ENCODE measurements at regions of chr21 and their contacts with region 1.

Region 1: GRCh38 chr21:28884976-28885852 is 107.5 kb downstream of the LTN1 start:
- DNase-seq: peak; percentile 81 to 98 (median 90)
- ATAC-seq: peak; percentile 91
- H3K4me3 ChIP-seq: peak overlapping the region; percentile 68
- H3K4me3 Mint-ChIP-seq: peak overlapping the region; percentile 92
- H3K27ac ChIP-seq: peak overlapping the region; percentile 87 to 93
- H3K27ac Mint-ChIP-seq: peak overlapping the region; percentile 99
- H3K4me1 ChIP-seq: peaks cover 20% of the 10 kb centered on the region
- H3K4me1 Mint-ChIP-seq: peaks cover 20% of the 10 kb centered on the region
- H3K27me3 ChIP-seq: no peaks in the 10 kb centered on the region
- H3K27me3 Mint-ChIP-seq: no peaks in the 10 kb centered on the region
- CTCF ChIP-seq: no peak

Region 2: GRCh38 chr21:28832013-28832714 is 53.0 kb before region 1 on chr21:
- CTCF ChIA-PET with region 1: no interaction called
- POLR2A ChIA-PET with region 1: interaction called, 14 read pairs
- intact Hi-C with region 1: loop called (anchors 1 to 5 kb)
- DNase-seq: peak in 5 of 9 experiments; percentile 4 to 75 (median 55)
- ATAC-seq: peak; percentile 85
- H3K4me3 ChIP-seq: no peak overlapping the region
- H3K4me3 Mint-ChIP-seq: peak overlapping the region; percentile 36
- H3K27ac ChIP-seq: peak overlapping the region in 1 of 2 experiments; percentile 55
- H3K27ac Mint-ChIP-seq: peak overlapping the region; percentile 74
- H3K4me1 ChIP-seq: peaks cover 60% of the 10 kb centered on the region
- H3K4me1 Mint-ChIP-seq: peaks cover 71% of the 10 kb centered on the region
- H3K27me3 ChIP-seq: no peaks in the 10 kb centered on the region
- H3K27me3 Mint-ChIP-seq: no peaks in the 10 kb centered on the region
- CTCF ChIP-seq: no peak

Region 3: GRCh38 chr21:28992526-28993292 is 107.5 kb after region 1 on chr21 and contains the start of gene LTN1:
- CTCF ChIA-PET with region 1: no interaction called
- POLR2A ChIA-PET with region 1: no interaction called
- intact Hi-C with region 1: loop called (anchors 1 to 10 kb)
- DNase-seq: peak; percentile 98 to 100 (median 99)
- ATAC-seq: peak; percentile 93
- H3K4me3 ChIP-seq: peak within 1 kb of the TSS; percentile 95 to 98
- H3K4me3 Mint-ChIP-seq: peak within 1 kb of the TSS; percentile 93
- H3K27ac ChIP-seq: peak within 1 kb of the TSS; percentile 84 to 88
- H3K27ac Mint-ChIP-seq: peak within 1 kb of the TSS; percentile 95
- H3K4me1 ChIP-seq: peaks cover 21% of the 10 kb centered on the region
- H3K4me1 Mint-ChIP-seq: peaks cover 40% of the 10 kb centered on the region
- H3K27me3 ChIP-seq: no peaks in the 10 kb centered on the region
- H3K27me3 Mint-ChIP-seq: no peaks in the 10 kb centered on the region
- CTCF ChIP-seq: no peak
- total RNA-seq, gene LTN1: 26.3 to 28.5 TPM

Region 4: DNA sequence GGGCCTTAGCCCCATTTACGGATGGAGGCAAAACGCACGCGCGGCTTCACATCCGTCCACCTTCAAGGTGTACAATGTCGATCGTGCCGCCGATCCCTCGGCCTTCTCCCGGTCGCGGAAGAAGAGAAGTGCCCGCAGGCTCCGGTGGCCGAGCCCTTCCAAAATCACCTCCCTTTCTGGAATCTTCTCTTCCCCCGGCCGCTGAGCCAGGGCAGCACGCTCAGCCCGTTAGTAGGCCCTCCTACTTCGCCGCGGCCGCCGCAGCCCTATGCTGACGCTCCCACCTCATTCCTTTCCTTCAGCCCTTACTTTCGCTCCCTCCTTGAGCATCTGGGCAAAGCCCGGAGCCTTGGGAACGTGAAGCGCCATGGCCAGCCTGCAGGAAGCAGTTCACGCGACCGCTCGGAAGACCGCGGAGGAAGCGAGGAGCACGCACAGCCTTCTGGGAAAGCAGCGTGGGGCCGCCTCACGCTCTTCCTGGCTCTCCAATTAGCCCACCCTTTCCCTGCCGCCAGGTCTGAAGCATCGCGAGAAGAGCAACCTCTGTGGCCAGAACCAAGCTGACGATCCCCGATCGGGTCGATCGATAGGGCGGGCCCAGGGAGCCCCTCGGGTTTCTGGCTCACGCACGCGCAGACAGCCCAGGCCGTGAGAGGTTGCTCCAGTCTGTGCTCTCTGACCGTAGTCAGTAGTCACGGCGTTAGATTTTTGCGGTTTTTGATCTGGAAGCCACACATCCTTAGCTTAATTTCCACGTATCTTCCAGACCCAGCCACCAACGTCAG is 188.2 kb after region 1 on chr21 and contains the start of gene CCT8:
- CTCF ChIA-PET with region 1: no interaction called
- POLR2A ChIA-PET with region 1: interaction called, 7 read pairs
- intact Hi-C with region 1: loop called (anchors 1 to 2 kb)
- DNase-seq: peak; percentile 95 to 100 (median 98)
- ATAC-seq: peak; percentile 93
- H3K4me3 ChIP-seq: peak within 1 kb of the TSS; percentile 88 to 92
- H3K4me3 Mint-ChIP-seq: peak within 1 kb of the TSS; percentile 100
- H3K27ac ChIP-seq: peak within 1 kb of the TSS; percentile 87 to 88
- H3K27ac Mint-ChIP-seq: peak within 1 kb of the TSS; percentile 98
- H3K4me1 ChIP-seq: peaks cover 42% of the 10 kb centered on the region
- H3K4me1 Mint-ChIP-seq: peaks cover 69% of the 10 kb centered on the region
- H3K27me3 ChIP-seq: no peaks in the 10 kb centered on the region
- H3K27me3 Mint-ChIP-seq: no peaks in the 10 kb centered on the region
- CTCF ChIP-seq: no peak
- total RNA-seq, gene CCT8: 104 to 116 TPM